ENCODE measurements at regions of chr3 and their contacts with region 1.

Region 1: GRCh38 chr3:15629860-15630597 is 28.5 kb downstream of the BTD start:
- DNase-seq: peak; percentile 91
- H3K4me3 ChIP-seq: peak overlapping the region in 1 of 3 experiments; percentile 50
- H3K27ac ChIP-seq: peak overlapping the region; percentile 100
- H3K4me1 ChIP-seq: peaks cover 52% of the 10 kb centered on the region
- H3K27me3 ChIP-seq: no peaks in the 10 kb centered on the region
- CTCF ChIP-seq: peak; percentile 61 to 76
- POLR2A ChIP-seq: no peak

Region 2: DNA sequence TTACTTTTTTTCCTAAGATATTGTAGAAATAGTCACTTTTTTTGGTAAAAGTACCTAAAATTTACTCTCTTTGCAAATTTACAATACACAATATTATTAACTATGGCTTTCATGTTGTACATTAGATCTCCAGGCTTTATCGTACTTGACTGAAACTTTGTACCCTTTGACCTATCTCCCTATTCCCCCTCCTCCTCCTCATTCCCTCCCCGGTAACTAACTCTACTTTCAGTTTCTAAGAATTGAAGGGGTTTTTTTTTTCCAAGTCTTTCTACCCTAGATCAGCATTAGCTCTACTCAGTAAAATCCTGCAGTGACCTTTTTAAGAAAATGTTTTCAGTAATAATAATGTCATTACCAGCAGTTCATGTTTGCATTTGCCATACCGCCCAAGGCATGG is 38.8 kb before region 1 on chr3:
- CTCF ChIA-PET with region 1: no interaction called
- POLR2A ChIA-PET with region 1: no interaction called
- dilution Hi-C with region 1: no loop called
- intact Hi-C with region 1: no loop called
- DNase-seq: no peak
- H3K4me3 ChIP-seq: no peak overlapping the region
- H3K27ac ChIP-seq: no peak overlapping the region
- H3K4me1 ChIP-seq: no peaks in the 10 kb centered on the region
- H3K27me3 ChIP-seq: no peaks in the 10 kb centered on the region
- CTCF ChIP-seq: no peak
- POLR2A ChIP-seq: no peak

Region 3: GRCh38 chr3:15647611-15648167 is 17.7 kb after region 1 on chr3:
- CTCF ChIA-PET with region 1: interaction called, 44 read pairs
- POLR2A ChIA-PET with region 1: interaction called, 21 read pairs
- dilution Hi-C with region 1: no loop called
- intact Hi-C with region 1: loop called (anchors 1 kb)
- DNase-seq: peak; percentile 98
- H3K4me3 ChIP-seq: no peak overlapping the region
- H3K27ac ChIP-seq: peak overlapping the region; percentile 99
- H3K4me1 ChIP-seq: peaks cover 46% of the 10 kb centered on the region
- H3K27me3 ChIP-seq: no peaks in the 10 kb centered on the region
- CTCF ChIP-seq: no peak
- POLR2A ChIP-seq: peak; percentile 63

Region 4: GRCh38 chr3:15708882-15709677 is 79.1 kb after region 1 on chr3:
- CTCF ChIA-PET with region 1: interaction called, 6 read pairs
- POLR2A ChIA-PET with region 1: no interaction called
- dilution Hi-C with region 1: no loop called
- intact Hi-C with region 1: loop called (anchors 2 kb)
- DNase-seq: peak; percentile 39
- H3K4me3 ChIP-seq: no peak overlapping the region
- H3K27ac ChIP-seq: no peak overlapping the region
- H3K4me1 ChIP-seq: no peaks in the 10 kb centered on the region
- H3K27me3 ChIP-seq: no peaks in the 10 kb centered on the region
- CTCF ChIP-seq: no peak
- POLR2A ChIP-seq: no peak

Region 5: DNA sequence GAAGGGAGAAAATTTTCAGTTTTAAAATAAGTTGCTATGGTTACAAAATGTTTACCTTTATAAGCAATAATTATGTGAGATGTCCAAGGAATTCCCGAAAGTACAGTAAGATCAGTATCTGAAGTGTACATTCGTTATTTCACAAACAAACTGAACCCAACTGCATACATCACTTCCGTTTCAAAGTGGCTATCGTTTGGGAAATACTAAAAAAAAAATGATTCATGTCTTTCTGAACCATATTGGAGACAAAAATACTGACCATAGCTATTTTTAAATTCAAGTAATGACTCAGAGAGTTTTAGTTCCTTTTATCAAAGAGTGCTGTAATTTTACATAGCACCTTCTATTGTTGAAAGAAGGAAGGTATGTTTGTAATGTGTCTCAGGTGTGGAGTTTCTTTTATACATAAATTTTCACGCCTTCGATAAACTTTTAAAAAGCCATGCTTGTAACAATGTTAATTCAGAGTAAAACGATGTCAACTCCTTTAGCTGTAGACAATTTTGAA is 175.8 kb after region 1 on chr3:
- CTCF ChIA-PET with region 1: interaction called, 59 read pairs
- POLR2A ChIA-PET with region 1: no interaction called
- dilution Hi-C with region 1: no loop called
- intact Hi-C with region 1: loop called (anchors 1 kb)
- DNase-seq: peak; percentile 90
- H3K4me3 ChIP-seq: no peak overlapping the region
- H3K27ac ChIP-seq: peak overlapping the region; percentile 37
- H3K4me1 ChIP-seq: peaks cover 15% of the 10 kb centered on the region
- H3K27me3 ChIP-seq: no peaks in the 10 kb centered on the region
- CTCF ChIP-seq: no peak
- POLR2A ChIP-seq: no peak

Region 6: DNA sequence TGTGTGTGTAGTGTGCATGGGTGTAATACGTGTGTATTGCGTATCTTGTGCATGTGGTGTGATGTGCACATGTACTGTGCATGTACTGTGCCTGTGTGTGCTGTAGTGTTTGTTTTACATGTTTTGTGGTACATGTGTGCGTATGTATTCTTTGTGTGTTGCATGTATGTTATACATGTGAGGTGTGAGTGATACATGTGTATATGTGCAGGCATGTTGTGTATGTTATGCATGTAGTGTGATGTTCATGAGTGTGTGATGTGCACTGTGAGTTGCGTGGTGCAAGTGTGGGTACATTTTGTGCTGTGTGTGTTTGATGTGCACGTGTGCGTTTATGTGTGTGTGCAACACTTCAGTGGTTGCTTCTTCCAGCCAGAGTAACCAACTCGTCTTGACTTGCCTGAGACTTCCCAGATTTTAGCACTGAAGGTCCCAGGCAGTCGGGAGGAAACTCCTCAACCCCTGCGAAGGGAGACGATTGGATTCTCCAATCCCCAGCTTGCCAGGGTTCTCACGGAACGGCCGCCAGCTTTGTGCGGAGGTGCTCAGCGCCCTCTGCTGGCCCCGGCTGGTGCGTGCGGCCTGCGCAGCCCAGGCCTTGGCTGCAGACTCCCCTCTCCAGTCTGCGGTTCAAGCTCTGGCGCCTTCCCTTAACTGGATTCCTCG is 548.1 kb after region 1 on chr3:
- CTCF ChIA-PET with region 1: no interaction called
- POLR2A ChIA-PET with region 1: no interaction called
- dilution Hi-C with region 1: no loop called
- intact Hi-C with region 1: loop called (anchors 2 kb)
- DNase-seq: peak; percentile 74
- H3K4me3 ChIP-seq: no peak overlapping the region
- H3K27ac ChIP-seq: no peak overlapping the region
- H3K4me1 ChIP-seq: peaks cover 11% of the 10 kb centered on the region
- H3K27me3 ChIP-seq: peaks cover 0 to 2% of the 10 kb centered on the region in 2 experiments
- CTCF ChIP-seq: peak; percentile 98 to 100
- POLR2A ChIP-seq: peak; percentile 14

Measured in endothelial cell of umbilical vein (primary cell).